ENCODE measurements at regions of chr11 and their contacts with region 1.

Region 1: GRCh38 chr11:65213322-65214211 is 31.8 kb downstream of the CAPN1 start:
- DNase-seq: peak; percentile 70 to 88
- H3K4me3 ChIP-seq: peak overlapping the region in 3 of 4 experiments; percentile 29 to 52 (median 39); a peak in 5 of 8 replicates
- H3K27ac ChIP-seq: peak overlapping the region; percentile 81; the same call in 1 of the 2 replicates
- H3K4me1 ChIP-seq: peaks cover 5 to 36% (median 29%) of the 10 kb centered on the region in 4 experiments
- H3K27me3 ChIP-seq: no peaks in the 10 kb centered on the region
- CTCF ChIP-seq: no peak
- EP300 ChIP-seq: peak in 1 of 2 experiments; percentile 10; a peak in 1 of 3 replicates
- POLR2A ChIP-seq: peak in 1 of 2 experiments; percentile 88; a peak in 2 of 3 replicates
- RAD21 ChIP-seq: no peak

Region 2: GRCh38 chr11:65243773-65244172 is 30.2 kb after region 1 on chr11:
- CTCF ChIA-PET with region 1: interaction called, 258 read pairs
- POLR2A ChIA-PET with region 1: interaction called, 54 read pairs
- DNase-seq: no peak
- H3K4me3 ChIP-seq: no peak overlapping the region
- H3K27ac ChIP-seq: no peak overlapping the region
- H3K4me1 ChIP-seq: peaks cover 3 to 12% (median 5%) of the 10 kb centered on the region in 4 experiments; a peak in 5 of 7 replicates
- H3K27me3 ChIP-seq: no peaks in the 10 kb centered on the region
- CTCF ChIP-seq: no peak
- EP300 ChIP-seq: no peak
- POLR2A ChIP-seq: no peak
- RAD21 ChIP-seq: no peak; a peak in 1 of 4 replicates

Region 3: GRCh38 chr11:65251476-65251875 is 37.9 kb after region 1 on chr11:
- CTCF ChIA-PET with region 1: interaction called, 258 read pairs
- POLR2A ChIA-PET with region 1: interaction called, 38 read pairs
- DNase-seq: no peak
- H3K4me3 ChIP-seq: no peak overlapping the region
- H3K27ac ChIP-seq: no peak overlapping the region
- H3K4me1 ChIP-seq: no peaks in the 10 kb centered on the region; a peak in 2 of 7 replicates
- H3K27me3 ChIP-seq: no peaks in the 10 kb centered on the region
- CTCF ChIP-seq: no peak
- EP300 ChIP-seq: no peak
- POLR2A ChIP-seq: no peak
- RAD21 ChIP-seq: no peak

Region 4: DNA sequence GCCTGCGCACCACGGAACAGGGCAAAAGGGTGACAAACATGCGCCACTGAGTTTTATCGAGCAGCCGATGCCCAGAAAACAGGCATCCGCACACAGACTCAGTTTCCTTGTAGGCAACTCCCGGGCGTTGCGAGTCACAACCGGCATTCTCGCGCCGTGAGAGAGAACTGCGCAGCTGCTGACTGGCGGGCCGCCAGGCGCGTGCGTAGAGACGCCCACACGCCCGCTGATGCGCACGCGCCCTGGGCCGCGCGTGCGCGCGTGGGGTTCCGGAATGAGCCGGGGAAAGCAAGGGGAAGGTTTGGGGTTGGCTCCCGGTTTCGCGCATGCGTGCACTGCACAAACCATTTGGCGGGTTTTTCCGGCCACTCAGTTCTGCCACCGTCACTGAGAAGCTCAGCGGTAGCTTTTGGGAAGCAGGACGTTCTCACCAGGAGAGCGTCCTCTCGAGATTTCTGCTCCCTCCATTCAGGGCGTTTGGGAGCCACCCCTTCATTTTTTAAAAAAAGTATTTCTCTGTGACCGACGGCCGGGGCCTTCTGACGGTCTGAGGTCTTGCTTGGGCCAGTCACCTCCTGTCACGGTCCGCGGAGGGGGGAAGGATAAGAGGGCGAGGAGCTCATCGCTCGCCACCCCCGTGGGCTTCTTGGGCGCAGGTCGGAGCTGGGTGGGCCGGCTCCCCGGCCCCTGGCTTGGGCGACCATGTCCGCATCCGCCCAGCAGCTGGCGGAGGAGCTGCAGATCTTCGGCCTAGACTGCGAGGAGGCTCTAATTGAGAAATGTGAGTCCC is 48.2 kb after region 1 on chr11 and contains the start of gene POLA2:
- CTCF ChIA-PET with region 1: interaction called, 6 read pairs
- POLR2A ChIA-PET with region 1: interaction called, 19 read pairs
- DNase-seq: peak; percentile 86 to 92
- H3K4me3 ChIP-seq: peak within 1 kb of the TSS; percentile 74 to 83 (median 81)
- H3K27ac ChIP-seq: peak within 1 kb of the TSS; percentile 46
- H3K4me1 ChIP-seq: peaks cover 0 to 3% (median under 1%) of the 10 kb centered on the region in 4 experiments; a peak in 2 of 7 replicates
- H3K27me3 ChIP-seq: no peaks in the 10 kb centered on the region
- CTCF ChIP-seq: no peak
- EP300 ChIP-seq: no peak
- POLR2A ChIP-seq: peak in 1 of 2 experiments; percentile 75; a peak in 2 of 3 replicates
- RAD21 ChIP-seq: no peak
- total RNA-seq, gene POLA2: 31.2 and 34.6 TPM in 2 replicates

Measured in H1 (cell line).